Ovary (tissue), 10 donors: ENCODE measurements at regions of chr5 and their contacts with region 1.

Region 1: GRCh38 chr5:95730730-95731570 is at the start of gene RHOBTB3:
- DNase-seq: peak; percentile 97 to 98 (median 98)
- H3K4me3 ChIP-seq: peak within 1 kb of the TSS; percentile 87
- H3K27ac ChIP-seq: peak within 1 kb of the TSS; percentile 99
- H3K4me1 ChIP-seq: peaks cover 14% of the 10 kb centered on the region
- H3K27me3 ChIP-seq: no peaks in the 10 kb centered on the region
- CTCF ChIP-seq: no peak
- EP300 ChIP-seq: no peak
- POLR2A ChIP-seq: peak; percentile 84
- total RNA-seq, gene RHOBTB3: 106 to 221 (median 200) TPM

Region 2: GRCh38 chr5:95664204-95664786 is 66.7 kb before region 1 on chr5:
- intact Hi-C with region 1: loop called in 2 of 4 experiments (anchors 5 to 10 kb)
- DNase-seq: peak in 2 of 5 donors; percentile 38 to 53
- H3K4me3 ChIP-seq: no peak overlapping the region
- H3K27ac ChIP-seq: peak overlapping the region in 1 of 2 donors; percentile 16
- H3K4me1 ChIP-seq: no peaks in the 10 kb centered on the region
- H3K27me3 ChIP-seq: no peaks in the 10 kb centered on the region
- CTCF ChIP-seq: peak; percentile 71 to 96 (median 88)
- EP300 ChIP-seq: no peak
- POLR2A ChIP-seq: no peak